ENCODE measurements at regions of chr15 and their contacts with region 1.

Region 1: GRCh38 chr15:37106490-37107001 is 6.2 kb upstream of the MEIS2 start:
- DNase-seq: peak; percentile 63 to 67
- ATAC-seq: no peak
- H3K4me3 ChIP-seq: peak overlapping the region in 9 of 10 donors; percentile 14 to 48 (median 42)
- H3K27ac ChIP-seq: peak overlapping the region; percentile 7 to 97 (median 77)
- H3K4me1 ChIP-seq: peaks cover 0 to 25% (median 13%) of the 10 kb centered on the region in 9 donors
- H3K27me3 ChIP-seq: peaks cover 0 to 100% (median 58%) of the 10 kb centered on the region in 7 donors
- CTCF ChIP-seq: peak in 7 of 9 donors; percentile 5 to 55 (median 44)

Region 2: DNA sequence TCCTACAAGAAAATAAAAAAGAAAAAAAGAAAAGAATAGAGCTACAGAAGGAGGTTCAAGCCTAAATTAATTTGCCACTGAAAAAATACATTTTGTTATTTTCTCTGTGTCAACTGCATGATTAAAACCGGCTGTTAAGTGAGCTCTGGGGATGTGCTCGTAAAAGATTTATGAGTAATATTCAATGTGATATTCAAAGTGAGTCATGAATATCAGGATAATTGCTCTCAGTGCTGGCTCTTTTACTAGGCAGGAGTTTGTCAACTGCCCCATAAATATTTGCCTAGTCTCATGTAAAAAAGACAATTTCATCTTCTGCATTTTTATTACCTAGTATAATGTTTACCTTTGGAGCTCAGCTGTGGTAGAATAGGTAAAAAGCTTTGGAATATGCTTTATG is 448.2 kb before region 1 on chr15:
- intact Hi-C with region 1: loop called in 1 of 10 experiments (anchors 10 kb)
- DNase-seq: no peak
- ATAC-seq: no peak
- H3K4me3 ChIP-seq: no peak overlapping the region
- H3K27ac ChIP-seq: no peak overlapping the region
- H3K4me1 ChIP-seq: peaks cover 0 to 13% (median 0%) of the 10 kb centered on the region in 9 donors
- H3K27me3 ChIP-seq: no peaks in the 10 kb centered on the region
- CTCF ChIP-seq: no peak

Region 3: GRCh38 chr15:36883713-36884517 is 222.6 kb before region 1 on chr15:
- intact Hi-C with region 1: loop called in 9 of 10 experiments (anchors 2 to 10 kb)
- DNase-seq: peak; percentile 87 to 88
- ATAC-seq: peak; percentile 85 to 96 (median 91)
- H3K4me3 ChIP-seq: peak overlapping the region in 9 of 10 donors; percentile 21 to 53 (median 40)
- H3K27ac ChIP-seq: no peak overlapping the region
- H3K4me1 ChIP-seq: peaks cover 0 to 29% (median 4%) of the 10 kb centered on the region in 9 donors
- H3K27me3 ChIP-seq: peaks cover 0 to 100% (median 66%) of the 10 kb centered on the region in 7 donors
- CTCF ChIP-seq: peak; percentile 76 to 88 (median 84)